Left ventricle myocardium inferior (tissue), 1 donor: ENCODE measurements at regions of chr2 and their contacts with region 1.

Region 1: GRCh38 chr2:126776692-126777619 is 121.0 kb downstream of the GYPC start:
- DNase-seq: peak; percentile 83
- H3K4me3 ChIP-seq: peak overlapping the region; percentile 82
- H3K27ac ChIP-seq: peak overlapping the region; percentile 81
- H3K4me1 ChIP-seq: peaks cover 14% of the 10 kb centered on the region
- H3K27me3 ChIP-seq: peaks cover 35% of the 10 kb centered on the region
- CTCF ChIP-seq: peak; percentile 94

Region 2: GRCh38 chr2:125745514-125745913 is 1031.4 kb before region 1 on chr2:
- intact Hi-C with region 1: loop called (anchors 10 kb)
- DNase-seq: no peak
- H3K4me3 ChIP-seq: no peak overlapping the region
- H3K27ac ChIP-seq: no peak overlapping the region
- H3K4me1 ChIP-seq: no peaks in the 10 kb centered on the region
- H3K27me3 ChIP-seq: no peaks in the 10 kb centered on the region
- CTCF ChIP-seq: peak; percentile 53

Region 3: DNA sequence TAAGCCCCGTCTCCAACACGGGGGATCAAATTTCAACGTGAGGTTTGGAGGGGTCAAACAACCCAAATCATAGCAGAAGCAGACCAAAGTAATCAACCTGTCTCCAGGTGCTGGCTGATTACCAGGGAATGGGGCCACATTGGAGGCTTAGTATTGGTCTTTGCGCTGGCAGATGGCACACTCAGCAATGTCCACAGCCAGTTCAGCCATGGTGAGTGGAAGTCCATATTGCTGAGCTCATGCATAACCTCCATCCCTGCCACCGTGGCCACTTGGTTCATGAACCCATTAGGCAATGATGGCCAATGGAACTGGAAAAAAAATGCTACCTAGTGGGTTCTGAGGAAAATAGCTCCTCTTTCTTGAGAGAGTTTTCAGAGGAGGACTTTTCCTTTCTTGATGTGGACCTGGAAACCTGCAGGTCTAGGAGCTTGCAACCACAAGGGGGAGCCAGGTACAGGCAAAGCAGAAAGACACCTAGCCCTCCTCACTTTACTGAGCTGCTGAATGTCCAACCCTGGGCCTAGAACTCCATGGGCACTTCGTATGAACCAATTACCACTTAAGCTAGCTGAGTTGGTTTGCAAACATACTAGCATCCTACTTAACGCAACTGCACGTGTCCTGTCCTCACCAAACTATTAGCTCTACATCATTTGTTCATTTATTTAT is 249.0 kb before region 1 on chr2:
- intact Hi-C with region 1: loop called (anchors 5 kb)
- DNase-seq: peak; percentile 65
- H3K4me3 ChIP-seq: no peak overlapping the region
- H3K27ac ChIP-seq: no peak overlapping the region
- H3K4me1 ChIP-seq: no peaks in the 10 kb centered on the region
- H3K27me3 ChIP-seq: no peaks in the 10 kb centered on the region
- CTCF ChIP-seq: peak; percentile 80

Region 4: DNA sequence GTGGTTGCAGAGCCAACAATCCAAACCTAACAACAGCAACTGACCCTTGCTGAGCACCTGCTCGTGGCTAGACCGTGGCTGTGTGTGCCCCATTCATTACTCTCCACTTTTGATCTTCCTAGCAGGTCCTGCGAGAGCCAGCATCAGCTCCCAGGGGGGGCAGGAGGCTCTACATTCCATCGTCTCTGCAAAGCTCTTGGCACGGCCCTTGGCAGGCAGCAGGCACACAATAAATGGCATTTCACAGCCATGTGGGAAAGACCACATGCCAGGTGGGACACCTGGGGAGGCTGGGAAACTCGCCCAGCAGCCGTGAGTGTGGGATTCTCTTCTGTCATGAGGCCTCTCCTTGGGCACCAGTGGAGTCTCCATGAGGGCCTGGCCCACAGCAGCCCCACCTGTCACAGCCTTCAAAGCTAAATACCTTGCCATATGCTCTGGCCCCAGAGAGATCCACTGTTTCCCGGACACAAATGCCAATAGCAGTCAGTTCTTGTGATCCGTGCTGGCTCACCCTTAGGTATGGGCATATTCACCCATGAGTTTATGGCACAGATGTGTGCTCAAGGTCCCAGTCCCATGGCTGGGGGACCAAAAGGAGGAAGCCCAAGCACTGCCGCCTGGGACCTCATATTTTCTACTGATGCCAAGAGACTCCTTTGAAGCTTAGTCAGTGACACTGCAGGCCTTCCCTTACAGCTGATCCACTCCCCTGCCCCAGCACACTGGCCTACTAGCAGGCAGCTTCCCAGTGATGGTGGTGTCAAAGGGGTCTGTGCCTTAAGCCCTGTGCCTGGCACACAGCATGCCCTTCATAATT is 114.9 kb after region 1 on chr2:
- intact Hi-C with region 1: no loop called
- DNase-seq: no peak
- H3K4me3 ChIP-seq: no peak overlapping the region
- H3K27ac ChIP-seq: no peak overlapping the region
- H3K4me1 ChIP-seq: no peaks in the 10 kb centered on the region
- H3K27me3 ChIP-seq: peaks cover 26% of the 10 kb centered on the region
- CTCF ChIP-seq: no peak